Transverse colon (tissue), 4 donors: ENCODE measurements at regions of chr2 and their contacts with region 1.

Region 1: DNA sequence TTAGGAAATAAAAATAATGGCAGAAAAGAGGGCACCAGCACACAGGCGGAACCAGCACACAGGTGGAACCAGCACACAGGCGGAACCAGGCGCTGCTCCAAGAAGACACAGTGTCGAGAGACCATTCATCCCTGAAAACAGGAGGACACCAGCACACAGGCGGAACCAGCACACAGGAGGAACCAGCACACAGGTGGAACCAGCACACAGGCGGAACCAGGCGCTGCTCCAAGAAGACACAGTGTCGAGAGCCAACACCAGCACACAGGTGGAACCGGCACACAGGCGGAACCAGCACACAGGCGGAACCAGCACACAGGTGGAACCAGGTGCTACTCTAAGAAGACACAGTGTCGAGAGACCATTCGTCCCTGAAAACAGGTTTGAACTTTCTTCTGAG is 115.5 kb upstream of the TMEM18 start:
- DNase-seq: no peak
- H3K4me3 ChIP-seq: no peak overlapping the region
- H3K27ac ChIP-seq: no peak overlapping the region
- H3K4me1 ChIP-seq: no peaks in the 10 kb centered on the region
- H3K27me3 ChIP-seq: no peaks in the 10 kb centered on the region
- CTCF ChIP-seq: no peak
- EP300 ChIP-seq: no peak
- POLR2A ChIP-seq: no peak

Region 2: GRCh38 chr2:681312-681711 is 111.4 kb before region 1 on chr2:
- in situ Hi-C with region 1: no loop called
- intact Hi-C with region 1: no loop called
- DNase-seq: no peak
- H3K4me3 ChIP-seq: no peak overlapping the region
- H3K27ac ChIP-seq: no peak overlapping the region
- H3K4me1 ChIP-seq: peaks cover 0 to 8% (median 3%) of the 10 kb centered on the region in 4 donors
- H3K27me3 ChIP-seq: no peaks in the 10 kb centered on the region
- CTCF ChIP-seq: no peak
- EP300 ChIP-seq: no peak
- POLR2A ChIP-seq: no peak

Region 3: DNA sequence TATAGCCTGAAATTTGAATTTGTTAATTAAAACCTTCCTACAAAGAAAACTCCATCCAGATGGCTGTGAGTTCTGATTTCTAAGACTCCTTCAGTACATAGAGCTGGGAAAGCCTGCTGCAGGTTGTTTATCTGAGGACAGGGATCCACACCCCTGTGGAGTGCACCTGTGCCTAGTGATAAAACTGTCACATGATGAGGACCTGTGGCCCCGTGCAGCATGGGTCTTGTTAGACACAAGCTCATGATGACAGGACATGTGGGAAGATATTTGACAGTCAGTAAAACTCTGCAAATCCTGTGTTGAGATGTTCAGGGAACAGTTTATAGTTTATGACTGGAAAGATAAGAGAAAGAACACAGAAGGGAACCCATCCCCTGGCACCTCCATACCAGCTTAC is 17.7 kb after region 1 on chr2:
- in situ Hi-C with region 1: no loop called
- intact Hi-C with region 1: loop called (anchors 2 kb)
- DNase-seq: no peak
- H3K4me3 ChIP-seq: no peak overlapping the region
- H3K27ac ChIP-seq: no peak overlapping the region
- H3K4me1 ChIP-seq: no peaks in the 10 kb centered on the region
- H3K27me3 ChIP-seq: no peaks in the 10 kb centered on the region
- CTCF ChIP-seq: no peak
- EP300 ChIP-seq: no peak
- POLR2A ChIP-seq: no peak